Activated T-helper 2 cell treated with anti-CD3 and anti-CD28 coated beads, Interferon-gamma antibody, Interleukin-2, Interleukin-4, amounts not matched to agents 10 μg/mL and 5 μg/mL and 100 μg/mL, durations not matched to agents 14 hours and 24 hours and 36 hours (primary cell): ENCODE measurements at regions of chr3 and their contacts with region 1.

Region 1: GRCh38 chr3:171459942-171460724 is at the start of gene TNIK:
- DNase-seq: peak; percentile 92
- H3K4me3 Mint-ChIP-seq: peak within 1 kb of the TSS; percentile 89
- H3K27ac Mint-ChIP-seq: peak within 1 kb of the TSS; percentile 87
- H3K4me1 Mint-ChIP-seq: peaks cover 43% of the 10 kb centered on the region
- H3K27me3 Mint-ChIP-seq: no peaks in the 10 kb centered on the region
- total RNA-seq, gene TNIK: 39.9 and 44.0 TPM in 2 replicates

Region 2: GRCh38 chr3:171068658-171069057 is 391.5 kb before region 1 on chr3:
- intact Hi-C with region 1: no loop called
- DNase-seq: no peak
- H3K4me3 Mint-ChIP-seq: no peak overlapping the region
- H3K27ac Mint-ChIP-seq: no peak overlapping the region
- H3K4me1 Mint-ChIP-seq: peaks cover 6% of the 10 kb centered on the region
- H3K27me3 Mint-ChIP-seq: no peaks in the 10 kb centered on the region

Region 3: GRCh38 chr3:171248425-171249111 is 211.6 kb before region 1 on chr3:
- intact Hi-C with region 1: loop called (anchors 2 kb)
- DNase-seq: no peak
- H3K4me3 Mint-ChIP-seq: no peak overlapping the region
- H3K27ac Mint-ChIP-seq: no peak overlapping the region
- H3K4me1 Mint-ChIP-seq: peaks cover 40% of the 10 kb centered on the region
- H3K27me3 Mint-ChIP-seq: no peaks in the 10 kb centered on the region

Region 4: GRCh38 chr3:171358181-171358880 is 101.8 kb before region 1 on chr3:
- intact Hi-C with region 1: loop called (anchors 5 kb)
- DNase-seq: no peak
- H3K4me3 Mint-ChIP-seq: no peak overlapping the region
- H3K27ac Mint-ChIP-seq: no peak overlapping the region
- H3K4me1 Mint-ChIP-seq: peaks cover 42% of the 10 kb centered on the region
- H3K27me3 Mint-ChIP-seq: no peaks in the 10 kb centered on the region

Region 5: GRCh38 chr3:171417813-171418212 is 42.3 kb before region 1 on chr3:
- intact Hi-C with region 1: no loop called
- DNase-seq: no peak
- H3K4me3 Mint-ChIP-seq: no peak overlapping the region
- H3K27ac Mint-ChIP-seq: no peak overlapping the region
- H3K4me1 Mint-ChIP-seq: peaks cover 11% of the 10 kb centered on the region
- H3K27me3 Mint-ChIP-seq: no peaks in the 10 kb centered on the region

Region 6: GRCh38 chr3:171480526-171480925 is 20.4 kb after region 1 on chr3:
- intact Hi-C with region 1: loop called (anchors 1 kb)
- DNase-seq: no peak
- H3K4me3 Mint-ChIP-seq: peak overlapping the region; percentile 31
- H3K27ac Mint-ChIP-seq: peak overlapping the region; percentile 75
- H3K4me1 Mint-ChIP-seq: peaks cover 16% of the 10 kb centered on the region
- H3K27me3 Mint-ChIP-seq: no peaks in the 10 kb centered on the region

Region 7: DNA sequence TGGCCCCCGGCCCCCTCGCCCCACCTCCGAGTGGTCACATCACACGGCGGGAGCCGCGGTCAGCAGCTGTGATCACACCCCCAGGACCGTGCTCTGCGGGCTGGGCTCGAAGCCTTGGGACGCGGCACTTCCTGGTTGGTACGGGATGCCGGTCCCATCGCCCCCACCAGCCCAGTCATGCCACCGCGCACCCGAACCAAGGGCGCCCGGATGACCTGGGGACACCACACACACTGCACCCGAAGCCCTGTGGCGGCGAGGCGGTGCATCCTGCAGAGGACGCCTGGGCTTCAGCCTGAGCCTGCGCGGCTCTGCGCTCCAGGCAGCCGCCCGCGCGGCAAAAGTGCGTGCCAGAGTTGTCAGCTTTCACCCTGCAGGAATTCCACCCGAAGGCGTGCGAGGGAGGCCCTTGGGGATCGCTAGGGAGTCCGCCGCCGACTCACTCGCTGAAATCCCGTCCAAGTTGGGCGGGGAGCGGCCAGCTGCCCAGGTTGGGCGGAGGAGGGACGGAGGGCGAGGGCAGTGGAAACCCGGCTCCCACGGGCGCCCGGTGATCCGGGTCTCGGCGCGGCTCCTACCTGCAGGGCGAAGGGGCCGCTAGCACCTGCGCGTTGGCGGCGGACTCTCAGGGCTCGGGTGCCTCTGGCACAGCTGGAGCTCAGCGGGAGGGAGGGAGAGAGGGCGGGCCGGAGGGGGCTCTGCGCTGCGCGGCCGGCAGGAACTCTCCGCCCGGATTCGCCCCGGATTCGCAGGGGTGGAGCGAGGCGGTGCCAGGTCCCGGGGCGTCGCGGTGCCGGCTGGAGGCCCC is 349.9 kb after region 1 on chr3 and contains the start of gene PLD1:
- intact Hi-C with region 1: loop called (anchors 5 kb)
- DNase-seq: peak; percentile 51
- H3K4me3 Mint-ChIP-seq: peak within 1 kb of the TSS; percentile 77
- H3K27ac Mint-ChIP-seq: peak within 1 kb of the TSS; percentile 47
- H3K4me1 Mint-ChIP-seq: peaks cover 43% of the 10 kb centered on the region
- H3K27me3 Mint-ChIP-seq: peaks cover 24% of the 10 kb centered on the region
- total RNA-seq, gene PLD1: 1.0 and 1.1 TPM in 2 replicates